PC-9 (cell line): ENCODE measurements at regions of chr9 and their contacts with region 1.

Region 1: GRCh38 chr9:135478858-135479468 is 619 bp upstream of the PPP1R26 start:
- DNase-seq: peak; percentile 58 to 69
- H3K4me3 ChIP-seq: peak overlapping the region; percentile 62
- H3K27ac ChIP-seq: peak overlapping the region; percentile 45
- H3K4me1 ChIP-seq: peaks cover 31% of the 10 kb centered on the region
- H3K27me3 ChIP-seq: no peaks in the 10 kb centered on the region
- CTCF ChIP-seq: no peak

Region 2: GRCh38 chr9:134294191-134295071 is 1184.5 kb before region 1 on chr9:
- CTCF ChIA-PET with region 1: no interaction called
- POLR2A ChIA-PET with region 1: interaction called, 23 read pairs
- intact Hi-C with region 1: no loop called
- DNase-seq: no peak
- H3K4me3 ChIP-seq: no peak overlapping the region
- H3K27ac ChIP-seq: no peak overlapping the region
- H3K4me1 ChIP-seq: no peaks in the 10 kb centered on the region
- H3K27me3 ChIP-seq: peaks cover 50% of the 10 kb centered on the region
- CTCF ChIP-seq: no peak

Region 3: DNA sequence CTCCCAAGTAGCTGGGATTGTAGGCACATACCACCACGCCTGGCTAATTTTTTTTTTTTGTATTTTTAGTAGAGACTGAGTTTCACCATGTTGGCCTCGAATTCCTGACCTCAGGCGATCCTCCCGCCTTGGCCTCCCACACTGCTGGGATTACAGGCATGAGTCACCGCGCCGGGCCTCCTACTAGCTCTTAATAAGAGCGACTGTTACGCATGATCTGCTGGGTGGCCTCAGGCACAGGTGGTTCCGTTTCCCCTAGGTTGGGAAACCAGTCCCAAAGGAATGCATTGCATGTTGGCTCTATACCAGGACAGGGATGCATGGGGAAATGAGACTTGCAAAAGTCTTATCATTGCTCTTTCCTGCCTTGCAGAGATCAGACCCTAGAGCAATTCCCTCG is 184.1 kb before region 1 on chr9:
- CTCF ChIA-PET with region 1: no interaction called
- POLR2A ChIA-PET with region 1: no interaction called
- intact Hi-C with region 1: no loop called
- DNase-seq: peak in 1 of 2 experiments; percentile 45
- H3K4me3 ChIP-seq: no peak overlapping the region
- H3K27ac ChIP-seq: no peak overlapping the region
- H3K4me1 ChIP-seq: no peaks in the 10 kb centered on the region
- H3K27me3 ChIP-seq: peaks cover 94% of the 10 kb centered on the region
- CTCF ChIP-seq: no peak

Region 4: GRCh38 chr9:135410831-135411473 is 68.0 kb before region 1 on chr9:
- CTCF ChIA-PET with region 1: interaction called, 26 read pairs
- POLR2A ChIA-PET with region 1: no interaction called
- intact Hi-C with region 1: no loop called
- DNase-seq: no peak
- H3K4me3 ChIP-seq: no peak overlapping the region
- H3K27ac ChIP-seq: no peak overlapping the region
- H3K4me1 ChIP-seq: peaks cover 8% of the 10 kb centered on the region
- H3K27me3 ChIP-seq: peaks cover 49% of the 10 kb centered on the region
- CTCF ChIP-seq: no peak

Region 5: DNA sequence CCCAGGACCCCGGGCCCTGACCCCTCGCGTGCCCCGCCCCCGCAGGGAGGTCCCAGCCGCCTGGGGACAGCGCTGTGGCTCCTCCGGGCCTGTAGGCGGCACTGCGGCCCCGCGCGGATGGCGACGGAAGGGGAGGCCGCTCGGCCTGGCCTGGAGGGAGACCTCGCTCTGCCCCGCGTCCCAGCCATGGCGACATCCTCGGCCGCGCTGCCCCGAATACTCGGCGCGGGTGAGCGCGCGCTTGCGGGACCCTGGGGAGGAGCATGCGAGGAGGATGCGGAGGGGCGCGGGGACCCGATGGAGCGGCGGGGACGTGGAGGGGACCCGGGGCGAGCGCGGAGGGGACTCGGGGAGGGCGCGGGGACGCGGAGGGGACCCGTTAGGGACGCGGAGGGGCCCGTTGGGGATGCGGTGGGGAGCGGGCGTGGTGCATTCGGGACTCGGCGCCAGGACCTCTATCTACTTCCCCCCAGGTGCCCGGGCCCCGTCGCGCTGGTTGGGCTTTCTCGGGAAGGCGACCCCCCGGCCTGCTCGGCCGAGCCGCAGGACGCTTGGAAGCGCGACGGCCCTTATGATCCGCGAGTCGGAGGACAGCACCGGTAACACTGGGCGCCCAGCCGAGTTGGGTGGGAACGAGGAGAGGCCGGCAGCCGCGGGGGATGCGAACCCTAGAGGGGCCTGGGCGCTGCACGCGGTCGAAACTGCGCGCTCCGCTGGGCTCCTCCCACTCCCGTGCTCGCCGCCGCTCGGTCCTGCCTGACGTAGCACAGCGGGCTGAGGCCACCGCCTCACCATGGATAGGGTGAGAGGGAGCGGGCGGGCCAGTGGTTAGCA is 21.8 kb after region 1 on chr9 and contains the start of gene MRPS2:
- CTCF ChIA-PET with region 1: interaction called, 5 read pairs
- POLR2A ChIA-PET with region 1: interaction called, 4 read pairs
- intact Hi-C with region 1: loop called (anchors 1 kb)
- DNase-seq: peak; percentile 76 to 95
- H3K4me3 ChIP-seq: peak within 1 kb of the TSS; percentile 63
- H3K27ac ChIP-seq: peak within 1 kb of the TSS; percentile 59
- H3K4me1 ChIP-seq: peaks cover 9% of the 10 kb centered on the region; the same call in 1 of the 2 replicates
- H3K27me3 ChIP-seq: no peaks in the 10 kb centered on the region
- CTCF ChIP-seq: peak; percentile 75
- total RNA-seq, gene MRPS2: 84.4 and 93.4 TPM in 2 replicates